ENCODE measurements at regions of chr6 and their contacts with region 1.

Region 1: GRCh38 chr6:10510592-10511367 is 10.4 kb upstream of the GCNT2 start:
- DNase-seq: peak; percentile 35
- H3K4me3 Mint-ChIP-seq: no peak overlapping the region
- H3K27ac Mint-ChIP-seq: no peak overlapping the region
- H3K4me1 Mint-ChIP-seq: peaks cover 13% of the 10 kb centered on the region
- H3K27me3 Mint-ChIP-seq: peaks cover 14% of the 10 kb centered on the region

Region 2: GRCh38 chr6:10528170-10528981 is 17.6 kb after region 1 on chr6:
- intact Hi-C with region 1: loop called (anchors 1 kb)
- DNase-seq: peak; percentile 41
- H3K4me3 Mint-ChIP-seq: peak overlapping the region; percentile 87
- H3K27ac Mint-ChIP-seq: peak overlapping the region; percentile 64
- H3K4me1 Mint-ChIP-seq: peaks cover 48% of the 10 kb centered on the region
- H3K27me3 Mint-ChIP-seq: peaks cover 5% of the 10 kb centered on the region

Region 3: GRCh38 chr6:10722820-10723566 is 212.2 kb after region 1 on chr6 and contains the start of gene TMEM14C:
- intact Hi-C with region 1: loop called (anchors 1 kb)
- DNase-seq: peak; percentile 88
- H3K4me3 Mint-ChIP-seq: peak within 1 kb of the TSS; percentile 91
- H3K27ac Mint-ChIP-seq: peak within 1 kb of the TSS; percentile 93
- H3K4me1 Mint-ChIP-seq: peaks cover 55% of the 10 kb centered on the region
- H3K27me3 Mint-ChIP-seq: no peaks in the 10 kb centered on the region
- total RNA-seq, gene TMEM14C: 57.3 and 63.1 TPM in 2 replicates

Region 4: DNA sequence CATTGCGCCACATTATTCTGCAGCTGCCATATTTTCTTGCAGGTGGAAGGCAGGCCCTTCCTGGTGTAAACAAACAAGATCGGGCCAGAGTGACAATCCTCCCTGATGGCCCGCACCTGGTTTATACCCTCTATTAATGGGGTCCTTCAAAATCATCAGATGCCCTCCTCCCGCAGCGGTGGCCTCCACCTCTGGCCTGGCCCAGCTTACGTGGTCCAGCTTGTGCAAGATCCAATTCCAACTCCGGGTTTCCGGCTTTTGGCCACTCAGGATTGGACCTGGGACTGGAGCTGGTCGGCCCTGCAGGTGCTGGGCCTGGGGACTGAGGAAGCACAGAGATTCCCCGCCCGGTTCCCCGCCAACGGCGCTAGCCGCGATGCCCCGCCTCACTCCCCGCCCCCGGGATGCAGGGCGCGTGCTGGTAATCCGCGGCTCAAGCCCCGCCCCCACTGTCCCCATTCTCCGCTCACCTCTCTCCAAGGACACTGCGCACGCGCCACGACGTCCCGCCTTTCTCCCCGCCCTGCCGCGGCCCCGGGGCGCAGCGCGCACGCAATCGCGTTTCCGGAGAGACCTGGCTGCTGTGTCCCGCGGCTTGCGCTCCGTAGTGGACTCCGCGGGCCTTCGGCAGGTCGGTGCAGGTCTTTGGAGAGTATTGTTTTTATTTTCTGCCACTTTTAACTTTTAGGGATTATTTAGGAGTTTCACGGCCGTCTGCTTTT is 236.6 kb after region 1 on chr6 and contains the start of gene TMEM14B:
- intact Hi-C with region 1: loop called (anchors 1 kb)
- DNase-seq: peak; percentile 100
- H3K4me3 Mint-ChIP-seq: peak within 1 kb of the TSS; percentile 93
- H3K27ac Mint-ChIP-seq: peak within 1 kb of the TSS; percentile 94
- H3K4me1 Mint-ChIP-seq: peaks cover 52% of the 10 kb centered on the region
- H3K27me3 Mint-ChIP-seq: no peaks in the 10 kb centered on the region
- total RNA-seq, gene TMEM14B: 82.1 and 83.7 TPM in 2 replicates

Region 5: DNA sequence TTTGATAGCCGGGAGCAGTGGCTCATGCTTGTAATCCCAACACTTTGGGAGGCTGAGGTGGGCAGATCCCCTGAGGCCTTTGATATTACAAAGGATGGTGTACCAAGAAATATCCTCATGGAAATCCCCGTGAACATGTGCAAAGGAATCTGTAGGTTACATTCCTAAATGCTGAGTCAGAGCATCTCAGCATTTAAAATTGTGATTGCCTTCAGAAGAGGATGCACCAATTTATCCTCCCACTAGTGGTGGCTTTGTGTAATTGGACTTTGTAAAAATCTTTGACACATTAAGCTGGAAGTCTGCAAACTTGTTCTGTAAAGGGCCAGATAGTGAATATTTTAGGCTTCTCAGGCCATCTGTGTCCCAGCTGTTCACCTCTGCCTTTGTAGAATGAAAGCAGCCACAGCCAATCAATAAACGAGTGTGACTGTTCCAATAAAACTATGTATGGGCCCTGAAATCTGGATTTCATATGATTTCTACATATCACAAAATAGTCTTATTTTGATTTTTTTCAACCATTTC is 248.6 kb after region 1 on chr6:
- intact Hi-C with region 1: loop called (anchors 1 kb)
- DNase-seq: no peak
- H3K4me3 Mint-ChIP-seq: no peak overlapping the region
- H3K27ac Mint-ChIP-seq: peak overlapping the region; percentile 29
- H3K4me1 Mint-ChIP-seq: peaks cover 26% of the 10 kb centered on the region
- H3K27me3 Mint-ChIP-seq: no peaks in the 10 kb centered on the region

Region 6: DNA sequence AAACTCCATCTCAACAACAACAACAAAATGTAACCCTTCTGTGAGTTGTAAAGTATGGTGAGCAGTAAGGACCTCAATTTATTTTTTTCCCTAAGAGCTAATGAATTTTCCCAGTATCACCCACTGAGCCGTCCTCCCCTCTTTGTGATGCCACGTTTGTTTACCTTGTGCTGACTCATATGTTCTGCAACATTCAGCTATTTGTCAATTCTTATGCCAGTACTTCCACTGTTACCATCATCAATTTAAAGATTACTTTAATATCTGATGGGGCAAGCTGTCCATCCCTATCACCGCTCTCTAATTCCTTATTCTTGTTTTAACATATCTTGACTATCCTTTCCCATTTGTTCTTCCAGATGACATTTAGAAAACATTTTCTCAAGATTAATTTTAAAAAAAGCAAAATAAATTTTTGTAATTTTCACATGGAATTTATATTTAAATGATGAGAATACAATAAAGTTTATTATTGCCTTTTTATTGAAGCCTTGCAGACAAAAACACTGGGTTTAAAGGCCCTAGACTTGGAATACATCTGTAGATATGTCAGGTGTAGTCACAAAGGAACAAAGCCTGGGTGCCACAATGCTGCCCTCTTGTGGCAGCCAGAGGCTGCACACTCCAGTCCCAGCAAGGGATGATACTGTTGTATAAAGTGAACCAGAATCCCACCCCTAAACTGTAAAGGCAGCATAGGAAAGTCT is 290.2 kb after region 1 on chr6:
- intact Hi-C with region 1: loop called (anchors 1 kb)
- DNase-seq: peak; percentile 48
- H3K4me3 Mint-ChIP-seq: no peak overlapping the region
- H3K27ac Mint-ChIP-seq: no peak overlapping the region
- H3K4me1 Mint-ChIP-seq: no peaks in the 10 kb centered on the region
- H3K27me3 Mint-ChIP-seq: no peaks in the 10 kb centered on the region